ENCODE measurements at regions of chr1 and their contacts with region 1.

Region 1: GRCh38 chr1:113759333-113760101 is at the start of gene PHTF1:
- DNase-seq: peak; percentile 85
- ATAC-seq: peak; percentile 94 to 97
- total RNA-seq, gene PHTF1: 8.3 to 9.2 TPM

Region 2: DNA sequence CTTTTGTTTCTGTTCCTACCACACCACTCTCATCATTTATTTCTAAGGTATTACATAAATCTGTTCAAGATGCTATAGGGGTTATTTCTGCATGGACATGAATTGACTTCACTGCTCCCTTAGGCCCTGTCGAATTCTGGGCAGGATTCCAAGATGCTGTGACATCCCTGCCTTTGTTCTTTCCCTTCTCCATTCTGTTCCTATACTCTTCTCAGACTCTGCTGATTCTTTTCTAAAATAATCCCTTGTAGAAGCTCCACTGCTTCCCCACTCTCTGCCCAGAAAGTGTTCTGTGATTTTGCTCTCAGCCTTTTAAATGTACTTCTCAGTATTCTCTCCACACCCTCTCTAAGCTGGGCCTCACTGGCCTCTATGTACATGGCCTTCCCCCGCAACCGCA is 99.4 kb before region 1 on chr1:
- intact Hi-C with region 1: no loop called
- DNase-seq: no peak
- ATAC-seq: no peak

Region 3: GRCh38 chr1:113811888-113812660 is 52.6 kb after region 1 on chr1 and contains the start of gene RSBN1:
- intact Hi-C with region 1: loop called in 1 of 2 experiments (anchors 1 kb)
- DNase-seq: peak; percentile 99
- ATAC-seq: peak; percentile 98 to 99
- total RNA-seq, gene RSBN1: 8.1 to 12.8 TPM

Measured in left cardiac atrium (tissue), 4 donors.